Left ventricle myocardium superior (tissue), 1 donor: ENCODE measurements at regions of chr11 and their contacts with region 1.

Region 1: DNA sequence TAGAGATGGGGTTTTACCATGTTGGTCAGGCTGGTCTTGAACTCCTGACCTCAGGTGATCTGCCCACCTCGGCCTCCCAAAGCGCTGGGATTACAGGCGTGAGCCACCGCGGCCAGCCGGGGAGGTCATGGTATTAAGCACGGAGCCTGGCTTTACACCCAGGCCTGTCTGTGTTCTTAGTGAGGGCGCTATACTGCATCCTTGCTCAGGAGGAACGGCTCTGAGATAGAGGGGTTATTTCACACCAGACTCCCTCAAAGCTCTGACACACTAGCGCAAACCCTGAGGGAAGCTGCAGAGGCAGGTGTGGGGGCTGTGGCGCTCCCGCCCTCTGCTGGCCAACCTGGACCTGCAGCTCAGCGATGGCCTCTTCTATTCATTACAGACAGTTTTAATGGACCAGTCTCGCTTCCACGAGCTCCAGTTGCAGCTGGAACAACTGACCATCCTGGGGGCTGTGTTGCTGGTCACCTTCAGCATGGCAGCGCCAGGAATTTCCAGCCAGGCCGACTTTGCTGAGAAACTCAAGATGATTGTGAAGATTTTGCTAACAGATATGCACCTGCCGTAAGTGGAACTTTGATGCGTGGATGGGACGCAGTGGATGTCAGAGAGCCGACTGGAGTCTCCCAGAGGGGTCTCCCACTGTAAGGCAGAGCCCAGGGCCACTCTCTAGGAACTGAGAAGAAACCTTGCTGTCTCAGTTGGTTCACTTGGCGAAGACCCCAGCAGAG is 26.2 kb downstream of the TCP11L1 start:
- DNase-seq: peak; percentile 77
- ATAC-seq: peak; percentile 87

Region 2: DNA sequence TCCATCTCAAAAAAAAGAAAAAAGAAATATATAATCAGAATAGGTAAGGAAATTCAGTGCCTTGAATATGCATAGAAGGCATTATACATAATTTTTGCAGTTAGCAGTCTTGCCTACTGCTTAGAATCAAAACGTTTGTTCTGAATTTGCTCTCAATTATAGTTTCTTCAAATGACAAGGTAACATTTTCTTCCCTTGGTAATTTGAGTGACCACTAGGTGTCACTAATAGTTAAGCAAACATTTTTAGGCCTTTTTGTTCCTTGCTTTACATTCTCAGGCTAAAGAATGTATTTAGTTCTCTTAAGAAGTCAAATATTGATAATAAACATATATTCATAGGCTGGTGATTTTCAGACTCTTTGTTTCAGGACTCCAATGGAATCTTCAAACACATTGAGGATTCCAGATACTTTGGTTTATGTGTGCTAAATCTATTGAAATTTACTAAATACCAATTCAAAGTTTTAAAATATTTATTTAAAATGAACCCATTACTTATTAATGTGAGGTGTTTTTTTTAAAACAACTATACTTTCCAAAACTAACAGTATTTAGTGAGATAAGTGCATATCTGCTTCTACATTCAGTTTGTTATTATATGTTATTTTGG is 105.0 kb before region 1 on chr11:
- intact Hi-C with region 1: loop called (anchors 10 kb)
- DNase-seq: no peak
- ATAC-seq: no peak